ENCODE measurements at regions of chr11 and their contacts with region 1.

Region 1: DNA sequence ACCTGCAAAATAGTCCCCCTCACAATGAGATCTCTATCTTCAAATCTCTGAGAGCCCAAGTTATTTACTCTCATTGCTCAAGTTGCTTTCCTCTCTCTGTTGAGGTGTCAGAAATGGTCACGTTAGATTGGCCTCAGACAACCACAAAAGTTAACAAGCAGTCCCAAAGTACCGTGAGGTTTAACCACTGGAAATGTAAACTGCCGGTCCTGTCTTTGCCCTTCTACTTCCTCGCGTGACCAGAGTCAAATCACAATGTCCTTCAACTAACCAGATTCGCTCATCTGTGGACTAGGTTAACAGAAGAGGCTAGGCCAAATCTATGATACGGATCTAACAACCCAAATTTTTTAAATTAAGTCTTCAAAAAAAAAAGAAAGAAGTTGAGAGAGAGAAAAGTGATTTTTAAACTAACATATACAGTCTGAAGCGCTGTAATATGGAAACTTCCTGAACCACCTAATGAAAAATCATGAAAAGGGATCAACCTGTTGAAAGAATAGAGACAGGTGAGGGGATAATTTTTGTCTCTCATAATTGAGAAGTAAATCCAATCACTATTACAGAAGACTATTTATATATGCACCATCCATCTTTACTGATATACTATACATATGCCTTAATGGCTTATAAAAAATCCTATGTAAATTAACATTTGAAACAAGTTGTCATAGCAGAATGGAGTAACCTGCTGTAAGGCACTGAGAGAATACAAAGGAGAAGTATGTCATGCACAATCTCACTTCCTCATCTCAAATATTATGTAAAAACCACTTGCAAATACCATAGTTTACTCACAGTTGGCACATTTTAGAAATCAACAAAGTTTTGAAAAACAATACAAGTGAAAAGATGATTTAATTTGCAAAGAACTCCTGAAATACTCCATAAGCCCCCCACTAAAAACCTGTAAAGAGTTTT is 3.3 kb upstream of the JAML start:
- DNase-seq: peak in 3 of 9 experiments; percentile 19 to 82 (median 77)
- ATAC-seq: peak; percentile 13
- H3K4me3 ChIP-seq: peak overlapping the region in 1 of 2 experiments; percentile 1
- H3K4me3 Mint-ChIP-seq: peak overlapping the region; percentile 48
- H3K27ac ChIP-seq: peak overlapping the region; percentile 8 to 46
- H3K27ac Mint-ChIP-seq: no peak overlapping the region
- H3K4me1 ChIP-seq: peaks cover 66% of the 10 kb centered on the region
- H3K4me1 Mint-ChIP-seq: peaks cover 49% of the 10 kb centered on the region
- H3K27me3 ChIP-seq: no peaks in the 10 kb centered on the region
- H3K27me3 Mint-ChIP-seq: no peaks in the 10 kb centered on the region
- CTCF ChIP-seq: no peak

Region 2: GRCh38 chr11:118216621-118217481 is 11.3 kb before region 1 on chr11:
- CTCF ChIA-PET with region 1: interaction called, 7 read pairs
- POLR2A ChIA-PET with region 1: interaction called, 77 read pairs
- intact Hi-C with region 1: loop called in 1 of 2 experiments (anchors 1 kb)
- DNase-seq: peak in 5 of 9 experiments; percentile 46 to 76 (median 51)
- ATAC-seq: peak; percentile 70
- H3K4me3 ChIP-seq: peak overlapping the region; percentile 20 to 31
- H3K4me3 Mint-ChIP-seq: peak overlapping the region; percentile 81
- H3K27ac ChIP-seq: peak overlapping the region; percentile 10 to 43
- H3K27ac Mint-ChIP-seq: peak overlapping the region; percentile 95
- H3K4me1 ChIP-seq: peaks cover 100% of the 10 kb centered on the region
- H3K4me1 Mint-ChIP-seq: peaks cover 98% of the 10 kb centered on the region
- H3K27me3 ChIP-seq: no peaks in the 10 kb centered on the region
- H3K27me3 Mint-ChIP-seq: no peaks in the 10 kb centered on the region
- CTCF ChIP-seq: no peak

Region 3: GRCh38 chr11:118240999-118241768 is 13.1 kb after region 1 on chr11:
- CTCF ChIA-PET with region 1: interaction called, 6 read pairs
- POLR2A ChIA-PET with region 1: interaction called, 18 read pairs
- intact Hi-C with region 1: loop called (anchors 1 to 2 kb)
- DNase-seq: peak in 8 of 9 experiments; percentile 36 to 89 (median 69)
- ATAC-seq: peak; percentile 92
- H3K4me3 ChIP-seq: peak overlapping the region in 1 of 2 experiments; percentile 2
- H3K4me3 Mint-ChIP-seq: peak overlapping the region; percentile 56
- H3K27ac ChIP-seq: peak overlapping the region; percentile 22 to 74
- H3K27ac Mint-ChIP-seq: peak overlapping the region; percentile 85
- H3K4me1 ChIP-seq: peaks cover 35% of the 10 kb centered on the region
- H3K4me1 Mint-ChIP-seq: peaks cover 72% of the 10 kb centered on the region
- H3K27me3 ChIP-seq: no peaks in the 10 kb centered on the region
- H3K27me3 Mint-ChIP-seq: no peaks in the 10 kb centered on the region
- CTCF ChIP-seq: no peak

Region 4: DNA sequence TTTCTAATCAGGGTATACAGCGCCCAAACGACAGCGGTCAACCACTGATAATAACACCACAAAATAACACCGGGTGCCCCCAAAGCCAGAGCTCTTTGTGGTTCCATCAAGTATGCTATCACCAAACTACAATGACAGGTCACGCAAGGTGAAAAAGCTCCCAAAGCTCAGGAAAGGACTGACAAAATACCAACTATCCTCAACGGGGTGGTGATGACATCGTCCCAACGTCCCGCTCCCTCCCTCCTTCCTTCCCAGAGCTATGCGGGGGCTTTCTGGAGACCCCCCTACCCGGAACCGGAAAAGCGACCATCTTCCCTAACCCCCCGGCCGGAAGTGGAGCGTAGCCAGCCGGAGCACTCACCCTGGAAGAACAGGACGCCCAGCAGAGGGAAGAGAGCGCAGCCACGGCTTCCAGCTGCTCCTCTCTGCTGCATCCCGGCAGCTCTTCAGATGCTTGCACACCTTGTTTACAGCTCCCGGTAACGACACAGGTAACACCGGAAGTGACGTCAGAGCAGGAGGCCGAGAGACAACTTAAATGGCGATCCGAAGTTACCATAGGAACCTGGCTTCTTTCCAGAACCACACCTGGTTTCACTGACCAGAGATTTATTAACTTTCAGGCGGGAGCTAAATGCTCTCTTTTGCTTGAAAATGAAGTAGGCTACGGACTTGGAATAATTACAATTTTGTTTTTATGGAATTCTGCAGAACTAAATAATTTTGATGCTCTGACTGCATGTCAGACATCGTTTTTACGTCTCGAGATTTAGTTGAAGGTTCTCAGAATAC is 23.9 kb after region 1 on chr11 and contains the start of gene MPZL3:
- CTCF ChIA-PET with region 1: interaction called, 4 read pairs
- POLR2A ChIA-PET with region 1: interaction called, 32 read pairs
- intact Hi-C with region 1: loop called (anchors 1 to 2 kb)
- DNase-seq: peak; percentile 74 to 96 (median 87)
- ATAC-seq: peak; percentile 75
- H3K4me3 ChIP-seq: peak within 1 kb of the TSS; percentile 67 to 94
- H3K4me3 Mint-ChIP-seq: peak within 1 kb of the TSS; percentile 98
- H3K27ac ChIP-seq: peak within 1 kb of the TSS; percentile 93 to 97
- H3K27ac Mint-ChIP-seq: peak within 1 kb of the TSS; percentile 100
- H3K4me1 ChIP-seq: peaks cover 8% of the 10 kb centered on the region
- H3K4me1 Mint-ChIP-seq: peaks cover 41% of the 10 kb centered on the region
- H3K27me3 ChIP-seq: no peaks in the 10 kb centered on the region
- H3K27me3 Mint-ChIP-seq: no peaks in the 10 kb centered on the region
- CTCF ChIP-seq: no peak
- total RNA-seq, gene MPZL3: 15.3 to 16.8 TPM

Region 5: GRCh38 chr11:118325283-118325682 is 97.2 kb after region 1 on chr11:
- CTCF ChIA-PET with region 1: no interaction called
- POLR2A ChIA-PET with region 1: no interaction called
- intact Hi-C with region 1: no loop called
- DNase-seq: no peak
- ATAC-seq: no peak
- H3K4me3 ChIP-seq: no peak overlapping the region
- H3K4me3 Mint-ChIP-seq: no peak overlapping the region
- H3K27ac ChIP-seq: no peak overlapping the region
- H3K27ac Mint-ChIP-seq: peak overlapping the region; percentile 29
- H3K4me1 ChIP-seq: peaks cover 17% of the 10 kb centered on the region
- H3K4me1 Mint-ChIP-seq: peaks cover 55% of the 10 kb centered on the region
- H3K27me3 ChIP-seq: no peaks in the 10 kb centered on the region
- H3K27me3 Mint-ChIP-seq: no peaks in the 10 kb centered on the region
- CTCF ChIP-seq: no peak

Region 6: DNA sequence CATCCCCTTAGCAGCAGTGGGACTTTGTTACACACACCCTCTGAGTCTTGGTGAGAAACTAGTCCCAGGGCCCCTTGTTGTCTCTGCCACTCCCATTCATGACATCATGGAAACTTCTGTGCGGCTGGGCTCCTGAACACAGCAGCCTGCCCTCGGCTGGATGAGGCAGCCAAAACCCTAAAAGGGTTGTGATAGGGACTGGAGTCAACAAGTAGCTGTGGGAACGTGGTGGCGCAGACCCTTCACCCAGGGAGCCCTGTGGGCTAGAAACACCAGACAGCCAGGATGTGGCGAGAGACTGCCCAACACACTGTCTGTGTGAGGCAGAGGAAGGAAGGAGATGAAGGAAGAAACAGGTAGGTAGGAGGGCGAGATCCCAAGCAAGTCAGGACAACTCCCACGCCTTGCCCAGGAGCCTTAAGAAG is 110.5 kb after region 1 on chr11:
- CTCF ChIA-PET with region 1: no interaction called
- POLR2A ChIA-PET with region 1: interaction called, 18 read pairs
- intact Hi-C with region 1: no loop called
- DNase-seq: peak; percentile 67 to 97 (median 91)
- ATAC-seq: peak; percentile 63
- H3K4me3 ChIP-seq: peak overlapping the region; percentile 87 to 92
- H3K4me3 Mint-ChIP-seq: peak overlapping the region; percentile 93
- H3K27ac ChIP-seq: peak overlapping the region; percentile 72 to 94
- H3K27ac Mint-ChIP-seq: peak overlapping the region; percentile 99
- H3K4me1 ChIP-seq: peaks cover 64% of the 10 kb centered on the region
- H3K4me1 Mint-ChIP-seq: peaks cover 74% of the 10 kb centered on the region
- H3K27me3 ChIP-seq: no peaks in the 10 kb centered on the region
- H3K27me3 Mint-ChIP-seq: no peaks in the 10 kb centered on the region
- CTCF ChIP-seq: no peak

Measured in CD8-positive, alpha-beta T cell (primary cell).